Mammary epithelial cell (primary cell): ENCODE measurements at regions of chr2 and their contacts with region 1.

Region 1: GRCh38 chr2:28958689-28959088 is 22.4 kb upstream of the TOGARAM2 start:
- DNase-seq: peak; percentile 71
- H3K4me3 ChIP-seq: no peak overlapping the region
- H3K27ac ChIP-seq: no peak overlapping the region
- H3K4me1 ChIP-seq: no peaks in the 10 kb centered on the region
- H3K27me3 ChIP-seq: no peaks in the 10 kb centered on the region
- CTCF ChIP-seq: peak; percentile 49 to 58

Region 2: DNA sequence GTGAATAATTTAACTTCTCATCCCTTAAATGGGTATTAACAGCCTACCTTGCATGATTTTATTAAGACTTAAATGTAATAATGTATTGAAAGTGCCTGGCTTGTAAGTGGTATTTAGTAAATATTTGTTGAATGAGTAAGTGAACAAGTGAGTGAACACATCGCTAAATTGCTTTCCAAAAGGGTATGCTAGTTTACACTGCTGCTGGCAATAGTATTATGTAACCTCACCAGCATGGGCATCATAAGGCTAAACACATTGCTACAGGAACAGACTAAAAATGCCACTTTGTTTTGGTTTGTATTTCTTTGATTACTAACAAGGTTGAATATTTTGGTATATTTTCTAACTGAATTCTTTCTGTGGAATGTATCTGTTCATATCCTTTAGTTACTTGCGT is 54.4 kb before region 1 on chr2:
- CTCF ChIA-PET with region 1: no interaction called
- dilution Hi-C with region 1: no loop called
- in situ Hi-C with region 1: no loop called
- intact Hi-C with region 1: no loop called
- DNase-seq: peak; percentile 28
- H3K4me3 ChIP-seq: no peak overlapping the region
- H3K27ac ChIP-seq: no peak overlapping the region
- H3K4me1 ChIP-seq: peaks cover 6% of the 10 kb centered on the region
- H3K27me3 ChIP-seq: no peaks in the 10 kb centered on the region
- CTCF ChIP-seq: no peak

Region 3: DNA sequence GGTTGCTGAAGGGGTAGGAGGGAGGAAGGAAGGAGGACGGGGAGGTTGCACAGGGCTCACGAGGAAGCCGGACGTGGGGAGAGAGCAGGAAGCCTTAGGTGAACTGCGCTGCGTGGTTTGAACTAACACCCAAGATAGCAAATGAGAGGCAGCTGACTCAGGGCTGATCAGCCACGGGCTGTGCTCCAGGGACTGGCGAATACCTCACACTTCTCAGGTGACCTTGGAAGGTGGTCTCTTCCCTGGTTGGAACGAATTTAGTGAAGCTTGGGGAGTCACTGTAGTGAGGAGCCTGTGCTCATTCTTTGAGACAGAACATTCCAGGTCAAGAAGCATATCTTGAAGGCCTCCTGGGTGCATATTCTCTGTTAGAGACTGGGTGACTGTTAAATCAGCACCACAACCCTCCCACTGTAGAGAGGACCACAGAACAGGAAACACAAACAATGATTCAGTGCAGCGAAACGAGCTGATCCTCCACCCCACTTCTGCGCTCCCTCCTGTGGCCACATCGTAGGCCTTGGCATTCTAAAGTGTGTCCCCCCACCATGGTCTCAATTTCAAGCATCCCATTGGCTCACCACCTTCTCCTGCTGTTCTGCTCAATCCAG is 56.2 kb after region 1 on chr2:
- CTCF ChIA-PET with region 1: no interaction called
- dilution Hi-C with region 1: no loop called
- in situ Hi-C with region 1: no loop called
- intact Hi-C with region 1: loop called (anchors 1 kb)
- DNase-seq: peak; percentile 34
- H3K4me3 ChIP-seq: no peak overlapping the region
- H3K27ac ChIP-seq: no peak overlapping the region
- H3K4me1 ChIP-seq: no peaks in the 10 kb centered on the region
- H3K27me3 ChIP-seq: no peaks in the 10 kb centered on the region
- CTCF ChIP-seq: no peak

Region 4: DNA sequence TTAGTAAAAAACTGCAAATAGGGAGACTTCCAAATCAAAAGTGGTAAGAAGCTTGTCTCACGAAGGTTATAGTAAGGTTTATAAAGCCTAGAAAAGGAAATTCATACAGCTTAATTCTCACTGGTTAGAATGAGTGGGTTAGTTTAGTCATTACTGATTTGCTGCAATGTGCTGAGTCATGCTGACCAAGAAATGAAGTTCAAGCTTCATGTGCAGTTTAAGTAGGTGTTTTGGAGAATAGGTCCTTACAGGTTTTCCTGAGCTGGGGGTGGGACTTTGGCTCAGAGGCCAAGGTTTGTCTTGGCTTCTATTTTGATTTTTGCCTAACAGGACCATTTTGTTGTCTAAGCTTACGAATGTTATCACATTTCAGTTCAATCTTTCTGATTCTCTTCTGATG is 171.6 kb after region 1 on chr2:
- CTCF ChIA-PET with region 1: no interaction called
- dilution Hi-C with region 1: no loop called
- in situ Hi-C with region 1: loop called in 1 of 2 experiments (anchors 25 kb)
- intact Hi-C with region 1: no loop called
- DNase-seq: peak; percentile 92
- H3K4me3 ChIP-seq: peak overlapping the region in 2 of 3 experiments; percentile 10 to 22
- H3K27ac ChIP-seq: peak overlapping the region; percentile 83
- H3K4me1 ChIP-seq: peaks cover 39% of the 10 kb centered on the region
- H3K27me3 ChIP-seq: no peaks in the 10 kb centered on the region
- CTCF ChIP-seq: no peak

Region 5: GRCh38 chr2:29206941-29207340 is 248.3 kb after region 1 on chr2:
- CTCF ChIA-PET with region 1: no interaction called
- dilution Hi-C with region 1: no loop called
- in situ Hi-C with region 1: loop called in 1 of 2 experiments (anchors 10 kb)
- intact Hi-C with region 1: no loop called
- DNase-seq: no peak
- H3K4me3 ChIP-seq: no peak overlapping the region
- H3K27ac ChIP-seq: no peak overlapping the region
- H3K4me1 ChIP-seq: peaks cover 5% of the 10 kb centered on the region
- H3K27me3 ChIP-seq: no peaks in the 10 kb centered on the region
- CTCF ChIP-seq: peak in 1 of 2 donors; percentile 11

Region 6: GRCh38 chr2:29923110-29923721 is 964.5 kb after region 1 on chr2:
- CTCF ChIA-PET with region 1: no interaction called
- dilution Hi-C with region 1: no loop called
- in situ Hi-C with region 1: no loop called
- intact Hi-C with region 1: loop called (anchors 2 kb)
- DNase-seq: peak; percentile 39
- H3K4me3 ChIP-seq: no peak overlapping the region
- H3K27ac ChIP-seq: no peak overlapping the region
- H3K4me1 ChIP-seq: peaks cover 6% of the 10 kb centered on the region
- H3K27me3 ChIP-seq: peaks cover 25% of the 10 kb centered on the region
- CTCF ChIP-seq: peak; percentile 92 to 93

Region 7: DNA sequence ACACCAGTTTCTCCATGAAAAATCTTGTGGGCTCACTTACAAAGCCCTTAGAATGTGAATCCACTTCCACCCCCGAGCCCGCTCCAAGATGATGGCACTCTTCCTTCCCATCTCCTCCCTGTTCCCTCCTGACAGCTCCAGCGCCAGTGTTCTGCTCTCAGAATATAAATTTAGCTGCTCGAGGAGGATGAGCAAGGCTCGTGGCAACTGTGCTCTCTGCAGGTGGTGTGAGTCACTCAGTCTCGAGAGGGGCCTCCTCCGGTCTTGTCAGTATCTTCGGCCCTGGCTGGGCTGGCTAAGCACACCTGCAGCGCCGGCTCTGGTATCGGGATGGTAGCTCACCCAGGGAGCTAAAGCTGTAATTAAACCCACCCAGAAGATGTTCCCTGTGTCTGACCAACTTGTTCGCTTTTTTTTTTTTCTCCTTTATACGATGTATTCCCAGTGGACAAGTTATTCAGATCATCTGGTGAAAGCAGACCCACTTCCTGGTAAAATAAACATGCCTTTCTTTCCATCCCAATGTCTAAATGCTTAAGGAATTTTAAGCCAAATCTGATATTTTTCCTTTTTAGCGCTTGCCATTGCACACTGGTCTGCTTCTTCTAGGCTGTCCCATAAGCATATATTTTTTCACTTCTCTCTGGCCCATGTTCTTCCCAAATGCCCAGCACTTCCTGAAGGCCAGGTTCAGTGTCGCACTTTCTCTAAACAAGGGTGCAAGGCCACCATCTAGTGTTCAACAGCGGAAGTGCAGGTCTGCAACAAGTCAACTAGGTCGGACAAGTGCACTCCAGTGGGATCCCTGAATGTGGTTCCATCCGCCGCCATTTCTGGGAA is 1156.7 kb after region 1 on chr2:
- CTCF ChIA-PET with region 1: no interaction called
- dilution Hi-C with region 1: no loop called
- in situ Hi-C with region 1: no loop called
- intact Hi-C with region 1: loop called (anchors 5 kb)
- DNase-seq: peak; percentile 62
- H3K4me3 ChIP-seq: no peak overlapping the region
- H3K27ac ChIP-seq: no peak overlapping the region
- H3K4me1 ChIP-seq: peaks cover 31% of the 10 kb centered on the region
- H3K27me3 ChIP-seq: peaks cover 1% of the 10 kb centered on the region
- CTCF ChIP-seq: peak; percentile 97 to 99